Activated CD4-positive, alpha-beta T cell treated with anti-CD3 and anti-CD28 coated beads for 36 hours (primary cell): ENCODE measurements at regions of chr17 and their contacts with region 1.

Region 1: DNA sequence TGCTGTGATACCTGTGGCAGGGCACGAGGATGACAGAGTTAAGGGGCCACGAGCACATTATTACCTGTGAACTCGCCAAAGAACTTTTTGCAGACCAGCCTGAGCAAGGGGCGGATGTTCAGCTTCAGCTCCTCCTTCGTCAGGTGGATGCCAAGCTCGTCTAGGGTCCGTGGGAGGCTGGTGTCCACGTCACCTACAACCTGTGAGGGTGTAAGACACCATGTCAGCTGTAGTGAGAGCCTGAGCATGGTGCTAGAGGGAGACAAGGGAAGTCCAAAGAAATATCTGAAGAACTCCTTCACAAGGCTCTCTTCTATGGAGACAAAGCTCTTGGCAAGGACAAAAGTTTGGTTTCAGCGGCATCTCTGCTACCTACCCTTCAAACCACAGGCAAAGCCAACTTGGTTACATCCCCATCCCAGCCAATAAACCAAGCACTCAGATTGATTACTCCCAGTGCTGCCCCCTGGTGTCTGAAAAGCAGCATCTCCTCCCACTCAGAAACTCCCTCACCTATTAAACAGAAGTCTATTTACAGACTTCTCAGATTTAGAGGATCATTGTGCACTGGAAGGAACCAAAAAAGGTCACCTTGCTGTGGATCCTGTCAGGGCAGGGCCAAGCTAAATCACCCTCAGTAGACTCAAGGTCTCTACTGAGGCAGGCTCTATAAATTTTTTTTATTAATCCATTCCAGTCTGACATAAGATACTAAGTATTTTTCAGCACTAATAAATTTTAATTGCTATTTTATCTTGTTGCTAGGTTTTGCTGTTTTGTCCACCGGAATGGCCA is 17.4 kb downstream of the HIGD1B start:
- DNase-seq: peak; percentile 79
- ATAC-seq: peak; percentile 84
- H3K4me3 Mint-ChIP-seq: no peak overlapping the region
- H3K27ac Mint-ChIP-seq: no peak overlapping the region
- H3K4me1 Mint-ChIP-seq: no peaks in the 10 kb centered on the region
- H3K27me3 Mint-ChIP-seq: no peaks in the 10 kb centered on the region

Region 2: DNA sequence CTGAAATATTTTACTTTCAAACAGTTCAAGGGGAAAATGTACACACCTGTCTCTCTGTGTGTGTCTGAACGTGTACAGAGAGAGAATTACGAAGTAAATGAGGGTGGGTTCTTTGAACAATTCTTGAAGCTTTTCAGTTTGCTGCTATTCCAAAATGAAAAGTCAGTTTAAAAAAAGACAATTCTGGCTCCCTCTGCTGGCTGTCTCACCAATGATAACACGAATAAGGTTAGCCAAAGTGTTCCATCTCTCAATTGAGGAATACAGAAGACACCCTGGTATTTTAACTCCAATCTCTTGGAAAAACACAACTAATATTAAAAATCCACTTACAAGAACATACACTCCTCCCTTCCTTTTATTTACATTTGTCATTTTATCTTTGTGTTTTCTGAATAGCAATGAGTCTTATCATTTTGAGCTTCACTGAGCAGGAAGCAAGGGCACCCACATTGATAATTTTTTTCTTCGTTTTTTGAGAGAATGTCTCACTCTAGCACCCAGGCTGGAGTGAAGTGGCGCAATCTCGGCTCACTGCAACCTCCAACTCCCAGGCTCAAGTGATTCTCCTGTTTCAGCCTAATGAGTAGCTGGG is 13.7 kb after region 1 on chr17:
- CTCF ChIA-PET with region 1: interaction called, 39 read pairs
- POLR2A ChIA-PET with region 1: interaction called, 4 read pairs
- intact Hi-C with region 1: no loop called
- DNase-seq: peak; percentile 47
- ATAC-seq: no peak
- H3K4me3 Mint-ChIP-seq: no peak overlapping the region
- H3K27ac Mint-ChIP-seq: no peak overlapping the region
- H3K4me1 Mint-ChIP-seq: no peaks in the 10 kb centered on the region
- H3K27me3 Mint-ChIP-seq: no peaks in the 10 kb centered on the region

Region 3: DNA sequence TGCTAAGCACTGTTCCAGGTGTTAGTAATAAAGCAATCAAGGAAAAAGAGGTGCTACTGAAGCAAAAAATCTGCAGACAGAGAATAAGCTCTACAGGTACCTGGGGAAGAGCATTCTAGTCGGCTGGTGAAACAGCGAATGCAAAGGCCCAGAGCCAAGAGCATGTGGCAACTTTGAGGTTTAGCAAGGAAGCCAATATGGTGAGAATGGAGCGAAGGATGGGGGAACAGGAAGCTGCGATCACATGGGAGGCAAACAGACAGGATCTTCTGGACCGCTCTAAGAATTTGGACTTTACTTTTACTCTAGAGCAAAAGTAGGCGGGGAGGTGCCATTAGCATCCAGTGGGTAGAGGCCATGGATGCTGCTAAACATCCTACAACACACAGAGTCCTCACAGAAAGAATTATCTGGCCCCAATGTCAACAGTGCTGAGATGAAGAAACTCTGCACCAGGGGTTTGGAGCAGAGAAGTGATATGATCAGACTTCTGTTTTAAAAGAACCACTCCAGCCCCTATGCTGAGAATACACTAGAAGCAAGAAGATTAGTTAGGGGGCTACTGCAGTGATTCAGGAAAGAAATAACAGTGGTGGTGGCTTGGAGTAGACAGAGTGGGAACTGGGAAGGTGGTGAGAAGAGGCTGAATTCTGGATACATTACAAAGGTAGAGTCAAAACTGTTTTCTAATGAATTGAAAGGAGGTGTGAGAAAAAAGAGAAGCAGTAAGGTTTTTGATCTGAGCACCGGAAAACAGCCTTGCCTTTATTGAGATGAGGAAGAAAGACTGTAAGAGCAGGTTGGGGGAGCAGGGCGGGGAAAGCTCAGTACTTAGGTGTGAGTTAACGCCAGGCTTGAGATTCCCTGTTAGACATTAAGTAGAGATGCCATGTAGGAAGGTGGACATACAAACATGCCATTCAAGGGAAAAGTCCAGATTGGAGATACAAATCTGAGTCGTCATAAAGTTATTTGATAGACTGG is 23.2 kb after region 1 on chr17:
- CTCF ChIA-PET with region 1: interaction called, 5 read pairs
- POLR2A ChIA-PET with region 1: no interaction called
- intact Hi-C with region 1: loop called in 1 of 2 experiments (anchors 2 kb)
- DNase-seq: no peak
- ATAC-seq: no peak
- H3K4me3 Mint-ChIP-seq: no peak overlapping the region
- H3K27ac Mint-ChIP-seq: no peak overlapping the region
- H3K4me1 Mint-ChIP-seq: peaks cover 14% of the 10 kb centered on the region
- H3K27me3 Mint-ChIP-seq: no peaks in the 10 kb centered on the region